ENCODE measurements at regions of chr3 and their contacts with region 1.

Region 1: GRCh38 chr3:183766745-183767606 is 58.4 kb downstream of the MAP6D1 start:
- DNase-seq: no peak
- H3K4me3 ChIP-seq: no peak overlapping the region
- H3K27ac ChIP-seq: no peak overlapping the region
- H3K27me3 ChIP-seq: no peaks in the 10 kb centered on the region
- CTCF ChIP-seq: peak; percentile 85

Region 2: GRCh38 chr3:183475016-183475763 is 291.8 kb before region 1 on chr3:
- CTCF ChIA-PET with region 1: interaction called, 19 read pairs
- POLR2A ChIA-PET with region 1: no interaction called
- DNase-seq: no peak
- H3K4me3 ChIP-seq: no peak overlapping the region
- H3K27ac ChIP-seq: no peak overlapping the region
- H3K27me3 ChIP-seq: peaks cover 12% of the 10 kb centered on the region
- CTCF ChIP-seq: no peak

Region 3: GRCh38 chr3:183481582-183481981 is 285.4 kb before region 1 on chr3:
- CTCF ChIA-PET with region 1: interaction called, 19 read pairs
- POLR2A ChIA-PET with region 1: no interaction called
- DNase-seq: no peak
- H3K4me3 ChIP-seq: no peak overlapping the region
- H3K27ac ChIP-seq: no peak overlapping the region
- H3K27me3 ChIP-seq: peaks cover 3% of the 10 kb centered on the region
- CTCF ChIP-seq: no peak

Region 4: GRCh38 chr3:183754052-183754451 is 12.9 kb before region 1 on chr3:
- CTCF ChIA-PET with region 1: interaction called, 13 read pairs
- POLR2A ChIA-PET with region 1: no interaction called
- DNase-seq: no peak
- H3K4me3 ChIP-seq: no peak overlapping the region
- H3K27ac ChIP-seq: no peak overlapping the region
- H3K27me3 ChIP-seq: no peaks in the 10 kb centered on the region
- CTCF ChIP-seq: no peak

Region 5: DNA sequence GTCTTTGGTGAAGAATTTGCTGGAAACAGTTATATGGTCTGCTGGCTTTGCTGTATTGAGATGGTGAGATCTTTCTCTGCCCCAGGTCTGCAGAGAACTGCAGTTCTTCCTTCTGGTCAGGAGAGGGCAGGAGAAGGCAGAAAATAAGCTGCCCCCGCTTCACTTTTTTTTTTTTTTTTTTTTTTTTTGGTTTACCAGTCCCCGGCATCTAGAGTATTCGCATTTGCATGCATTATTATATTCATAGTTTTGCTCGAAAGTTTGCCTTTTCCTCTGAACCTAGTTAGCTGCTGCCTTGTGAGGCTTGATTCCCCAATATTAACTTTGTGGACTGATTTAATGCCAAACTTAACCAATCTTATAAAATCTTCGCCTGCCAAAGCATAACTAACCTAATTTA is 128.3 kb after region 1 on chr3:
- CTCF ChIA-PET with region 1: no interaction called
- POLR2A ChIA-PET with region 1: no interaction called
- DNase-seq: peak; percentile 20
- H3K4me3 ChIP-seq: no peak overlapping the region
- H3K27ac ChIP-seq: no peak overlapping the region
- H3K27me3 ChIP-seq: peaks cover 16% of the 10 kb centered on the region
- CTCF ChIP-seq: peak; percentile 91